H1 (cell line): ENCODE measurements at regions of chr3 and their contacts with region 1.

Region 1: GRCh38 chr3:51371943-51372557 is 13.0 kb upstream of the MANF start:
- DNase-seq: peak in 1 of 2 experiments; percentile 73
- H3K4me3 ChIP-seq: no peak overlapping the region
- H3K27ac ChIP-seq: no peak overlapping the region
- H3K4me1 ChIP-seq: no peaks in the 10 kb centered on the region
- H3K27me3 ChIP-seq: no peaks in the 10 kb centered on the region
- CTCF ChIP-seq: peak in 2 of 3 experiments; percentile 74 to 79; a peak in 3 of 4 replicates
- EP300 ChIP-seq: no peak
- POLR2A ChIP-seq: no peak
- RAD21 ChIP-seq: peak; percentile 85 to 89

Region 2: DNA sequence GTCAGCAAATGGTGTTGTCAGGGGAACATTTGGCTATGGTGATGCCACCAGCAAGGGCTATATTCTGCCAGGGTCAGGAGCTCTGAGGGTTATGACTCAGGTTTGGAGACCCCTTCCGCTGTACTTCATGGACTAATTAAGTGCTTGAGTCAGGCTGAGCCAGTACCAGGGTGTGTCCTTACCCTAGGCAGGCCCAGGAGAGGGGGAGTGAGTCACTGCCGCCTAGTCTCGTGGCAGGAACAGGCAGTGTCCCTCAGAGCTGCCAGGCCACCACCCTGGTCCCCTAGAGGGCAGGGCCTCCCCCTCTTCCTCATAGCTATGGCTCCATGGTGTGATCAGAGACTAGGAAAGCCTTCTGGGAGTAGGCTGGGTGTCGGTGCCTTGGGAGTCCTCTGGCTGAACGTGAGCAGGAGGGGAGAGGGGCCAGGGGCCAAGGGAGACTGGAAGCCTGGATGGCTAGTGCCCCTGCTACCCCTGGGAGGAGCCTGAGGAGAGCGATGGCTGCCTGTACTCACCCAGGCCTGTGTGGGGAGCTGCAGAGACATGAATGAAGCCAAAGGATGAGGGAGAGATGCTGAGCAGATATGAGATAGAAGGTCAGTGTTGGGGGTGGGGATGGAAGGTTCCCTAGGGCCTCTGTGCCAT is 744.5 kb before region 1 on chr3:
- CTCF ChIA-PET with region 1: interaction called, 14 read pairs
- POLR2A ChIA-PET with region 1: no interaction called
- DNase-seq: no peak
- H3K4me3 ChIP-seq: no peak overlapping the region
- H3K27ac ChIP-seq: peak overlapping the region; percentile 32; the same call in 1 of the 2 replicates
- H3K4me1 ChIP-seq: peaks cover 2 to 21% (median 12%) of the 10 kb centered on the region in 4 experiments
- H3K27me3 ChIP-seq: no peaks in the 10 kb centered on the region
- CTCF ChIP-seq: peak in 2 of 3 experiments; percentile 79 to 82; a peak in 3 of 4 replicates
- EP300 ChIP-seq: no peak
- POLR2A ChIP-seq: no peak
- RAD21 ChIP-seq: peak; percentile 90 to 91

Region 3: GRCh38 chr3:51099794-51100535 is 272.1 kb before region 1 on chr3:
- CTCF ChIA-PET with region 1: interaction called, 51 read pairs
- POLR2A ChIA-PET with region 1: interaction called, 3 read pairs
- DNase-seq: peak; percentile 10 to 67
- H3K4me3 ChIP-seq: no peak overlapping the region
- H3K27ac ChIP-seq: no peak overlapping the region
- H3K4me1 ChIP-seq: no peaks in the 10 kb centered on the region
- H3K27me3 ChIP-seq: no peaks in the 10 kb centered on the region
- CTCF ChIP-seq: peak in 2 of 3 experiments; percentile 67 to 85; a peak in 3 of 4 replicates
- EP300 ChIP-seq: no peak
- POLR2A ChIP-seq: no peak
- RAD21 ChIP-seq: peak; percentile 72 to 77

Region 4: DNA sequence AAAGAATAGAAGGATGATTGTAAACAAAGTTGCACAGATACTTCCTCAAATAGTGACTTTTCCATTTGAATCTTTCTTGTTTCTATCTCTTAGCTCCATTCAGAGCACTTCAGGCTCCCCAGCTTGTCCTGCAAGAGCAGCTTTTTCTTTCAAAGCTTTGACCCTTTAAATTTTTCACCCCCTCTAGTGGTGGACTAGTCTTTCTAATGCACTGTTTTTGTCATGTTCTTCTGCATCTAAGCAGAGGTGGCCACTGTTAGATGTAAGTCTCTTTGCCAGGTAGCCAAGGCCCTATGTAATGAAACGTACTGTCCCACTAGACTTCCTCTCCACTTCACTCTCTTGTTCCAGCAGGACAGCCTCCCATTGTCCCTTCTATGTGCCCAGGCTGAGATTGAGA is 61.0 kb before region 1 on chr3:
- CTCF ChIA-PET with region 1: interaction called, 10 read pairs
- POLR2A ChIA-PET with region 1: no interaction called
- DNase-seq: no peak
- H3K4me3 ChIP-seq: no peak overlapping the region
- H3K27ac ChIP-seq: no peak overlapping the region
- H3K4me1 ChIP-seq: no peaks in the 10 kb centered on the region
- H3K27me3 ChIP-seq: peaks cover 0 to 1% (median 0%) of the 10 kb centered on the region in 4 experiments; a peak in 1 of 7 replicates
- CTCF ChIP-seq: peak in 2 of 3 experiments; percentile 23 to 35; a peak in 2 of 4 replicates
- EP300 ChIP-seq: no peak
- POLR2A ChIP-seq: no peak
- RAD21 ChIP-seq: peak; percentile 30 to 43; a peak in 3 of 4 replicates

Region 5: DNA sequence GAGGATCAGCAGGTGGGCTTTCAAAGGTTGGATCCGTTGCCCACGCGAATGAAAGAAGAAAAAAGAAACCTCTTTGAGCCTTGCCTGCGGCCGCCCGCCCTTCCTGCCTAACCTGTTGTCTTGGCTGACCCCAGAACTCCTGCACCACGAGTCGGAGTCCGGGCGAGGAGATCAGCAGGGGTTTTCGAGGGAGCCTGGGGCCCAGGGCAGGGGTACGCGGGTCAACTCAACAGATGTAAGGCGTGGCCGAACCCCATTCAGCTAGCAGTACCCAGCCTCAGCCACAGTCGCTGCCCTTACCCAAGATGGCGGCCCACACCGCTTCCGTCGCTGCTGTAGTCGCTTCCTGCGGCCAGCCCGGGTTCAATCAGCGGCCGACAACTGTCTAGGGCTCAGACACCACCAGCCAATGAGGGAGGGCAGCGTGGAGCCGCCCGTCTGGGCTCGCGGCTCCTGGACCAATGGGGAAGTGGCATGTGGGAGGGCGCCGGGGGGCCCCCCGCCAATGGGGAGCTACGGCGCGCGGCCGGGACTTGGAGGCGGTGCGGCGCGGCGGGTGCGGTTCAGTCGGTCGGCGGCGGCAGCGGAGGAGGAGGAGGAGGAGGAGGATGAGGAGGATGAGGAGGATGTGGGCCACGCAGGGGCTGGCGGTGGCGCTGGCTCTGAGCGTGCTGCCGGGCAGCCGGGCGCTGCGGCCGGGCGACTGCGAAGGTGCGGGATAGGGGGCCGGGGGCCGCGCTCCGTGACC is 12.8 kb after region 1 on chr3 and contains the start of gene MANF:
- CTCF ChIA-PET with region 1: interaction called, 24 read pairs
- POLR2A ChIA-PET with region 1: interaction called, 5 read pairs
- DNase-seq: peak; percentile 93 to 97
- H3K4me3 ChIP-seq: peak within 1 kb of the TSS; percentile 88 to 99 (median 96)
- H3K27ac ChIP-seq: peak within 1 kb of the TSS; percentile 92
- H3K4me1 ChIP-seq: peaks cover 0 to 23% (median 6%) of the 10 kb centered on the region in 4 experiments
- H3K27me3 ChIP-seq: no peaks in the 10 kb centered on the region
- CTCF ChIP-seq: no peak
- EP300 ChIP-seq: no peak
- POLR2A ChIP-seq: peak in 1 of 2 experiments; percentile 85; a peak in 2 of 3 replicates
- RAD21 ChIP-seq: no peak
- total RNA-seq, gene MANF: 159 and 175 TPM in 2 replicates

Region 6: DNA sequence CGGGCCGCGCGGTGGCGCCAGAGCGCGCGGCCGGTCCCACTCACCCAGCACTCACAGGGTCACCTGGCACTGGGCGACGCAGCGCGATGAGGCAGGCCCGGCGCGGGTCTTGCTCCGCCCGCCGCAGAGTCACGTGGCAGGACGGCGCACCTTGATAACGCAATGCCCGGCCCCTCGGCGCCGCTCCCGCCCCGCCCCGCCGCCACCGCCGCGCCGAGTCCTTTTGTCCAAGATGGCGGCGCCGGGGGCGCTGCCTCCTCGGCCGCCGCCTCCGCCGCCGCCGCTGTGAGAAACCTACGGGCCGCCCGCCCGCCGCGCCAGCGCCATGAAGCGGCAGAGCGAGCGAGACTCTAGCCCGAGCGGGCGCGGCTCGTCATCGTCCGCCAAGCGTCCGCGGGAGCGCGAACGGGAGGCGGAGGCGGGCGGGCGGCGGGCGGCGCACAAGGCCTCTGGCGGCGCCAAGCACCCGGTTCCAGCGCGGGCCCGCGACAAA is 19.1 kb after region 1 on chr3 and contains the start of gene RBM15B:
- CTCF ChIA-PET with region 1: interaction called, 10 read pairs
- POLR2A ChIA-PET with region 1: interaction called, 5 read pairs
- DNase-seq: peak; percentile 93 to 98
- H3K4me3 ChIP-seq: peak within 1 kb of the TSS; percentile 75 to 90 (median 82)
- H3K27ac ChIP-seq: peak within 1 kb of the TSS; percentile 81
- H3K4me1 ChIP-seq: peaks cover 4 to 30% (median 17%) of the 10 kb centered on the region in 4 experiments
- H3K27me3 ChIP-seq: no peaks in the 10 kb centered on the region
- CTCF ChIP-seq: peak in 1 of 3 experiments; percentile 84; a peak in 2 of 4 replicates
- EP300 ChIP-seq: peak in 1 of 2 experiments; percentile 83; a peak in 1 of 3 replicates
- POLR2A ChIP-seq: peak in 1 of 2 experiments; percentile 94; a peak in 2 of 3 replicates
- RAD21 ChIP-seq: peak; percentile 57 to 62; a peak in 3 of 4 replicates
- total RNA-seq, gene RBM15B: 59.1 and 60.9 TPM in 2 replicates